ENCODE measurements at regions of chr22 and their contacts with region 1.

Region 1: DNA sequence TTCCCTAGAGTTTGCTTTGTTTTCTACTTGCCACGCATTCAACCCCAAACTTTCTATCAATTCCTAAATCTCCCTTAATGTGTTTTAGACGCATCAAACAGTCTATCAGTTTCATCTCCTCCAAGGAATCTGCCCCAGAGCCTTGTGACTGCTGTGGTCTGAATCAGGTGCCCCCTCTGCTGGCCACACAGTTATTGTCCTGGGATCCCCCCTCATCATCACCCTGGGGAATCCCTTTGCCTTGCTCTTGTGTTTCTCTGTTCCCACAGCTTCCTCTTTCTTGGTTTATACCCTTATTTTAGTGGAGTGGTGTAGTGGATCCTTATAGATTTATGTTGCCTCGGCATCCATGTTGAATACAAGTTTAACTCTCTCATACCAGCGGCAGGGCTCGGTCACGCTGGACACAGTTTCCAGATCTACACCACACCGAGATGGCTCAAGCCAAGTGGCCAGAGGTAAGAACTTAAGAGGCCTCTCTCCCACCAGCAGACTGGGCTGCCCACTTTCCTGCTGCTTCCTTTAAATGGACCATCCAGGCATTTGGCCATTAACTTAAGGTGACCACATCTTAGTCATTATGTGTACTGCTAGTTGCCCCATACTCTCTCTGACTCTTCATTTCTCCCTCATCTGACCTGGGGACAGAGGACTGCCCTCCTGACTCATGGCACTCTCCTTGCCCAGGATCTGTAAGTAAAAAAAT is 8.2 kb downstream of the UPB1 start:
- DNase-seq: peak; percentile 65 to 74
- H3K4me3 ChIP-seq: no peak overlapping the region
- H3K4me3 Mint-ChIP-seq: peak overlapping the region; percentile 29
- H3K27ac Mint-ChIP-seq: peak overlapping the region; percentile 80
- H3K4me1 ChIP-seq: peaks cover 94% of the 10 kb centered on the region
- H3K4me1 Mint-ChIP-seq: peaks cover 65% of the 10 kb centered on the region
- H3K27me3 ChIP-seq: no peaks in the 10 kb centered on the region
- H3K27me3 Mint-ChIP-seq: no peaks in the 10 kb centered on the region
- CTCF ChIP-seq: peak; percentile 70 to 76

Region 2: DNA sequence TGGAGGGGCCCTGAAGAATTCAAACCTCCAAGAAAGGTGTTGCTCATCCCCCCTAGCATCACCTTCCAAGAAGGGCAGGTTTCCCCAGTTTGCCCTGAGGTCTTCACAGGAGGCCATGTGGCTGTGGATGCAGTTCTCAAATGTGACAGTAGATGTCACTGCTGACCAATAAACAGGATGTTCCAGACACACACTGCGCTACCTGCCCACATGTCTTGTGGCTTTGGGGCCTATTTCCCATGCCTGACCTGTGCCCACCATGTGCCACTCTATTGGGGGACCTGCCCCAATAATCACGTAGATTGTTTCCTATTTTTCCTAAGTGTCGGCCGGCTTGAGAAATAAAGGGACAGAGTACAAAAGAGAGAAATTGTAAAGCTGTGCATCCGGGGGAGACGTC is 518.9 kb before region 1 on chr22:
- CTCF ChIA-PET with region 1: no interaction called
- POLR2A ChIA-PET with region 1: no interaction called
- intact Hi-C with region 1: no loop called
- DNase-seq: peak; percentile 53 to 67
- H3K4me3 ChIP-seq: no peak overlapping the region
- H3K4me3 Mint-ChIP-seq: no peak overlapping the region
- H3K27ac Mint-ChIP-seq: no peak overlapping the region
- H3K4me1 ChIP-seq: no peaks in the 10 kb centered on the region
- H3K4me1 Mint-ChIP-seq: no peaks in the 10 kb centered on the region
- H3K27me3 ChIP-seq: no peaks in the 10 kb centered on the region
- H3K27me3 Mint-ChIP-seq: no peaks in the 10 kb centered on the region
- CTCF ChIP-seq: peak; percentile 65 to 80

Region 3: GRCh38 chr22:24379536-24379935 is 123.8 kb before region 1 on chr22:
- CTCF ChIA-PET with region 1: no interaction called
- POLR2A ChIA-PET with region 1: no interaction called
- intact Hi-C with region 1: no loop called
- DNase-seq: no peak
- H3K4me3 ChIP-seq: no peak overlapping the region
- H3K4me3 Mint-ChIP-seq: no peak overlapping the region
- H3K27ac Mint-ChIP-seq: no peak overlapping the region
- H3K4me1 ChIP-seq: no peaks in the 10 kb centered on the region
- H3K4me1 Mint-ChIP-seq: no peaks in the 10 kb centered on the region
- H3K27me3 ChIP-seq: no peaks in the 10 kb centered on the region
- H3K27me3 Mint-ChIP-seq: no peaks in the 10 kb centered on the region
- CTCF ChIP-seq: no peak

Region 4: GRCh38 chr22:24423519-24424000 is 79.7 kb before region 1 on chr22:
- CTCF ChIA-PET with region 1: interaction called, 12 read pairs
- POLR2A ChIA-PET with region 1: no interaction called
- intact Hi-C with region 1: loop called (anchors 2 kb)
- DNase-seq: peak in 1 of 2 experiments; percentile 81
- H3K4me3 ChIP-seq: peak overlapping the region; percentile 68
- H3K4me3 Mint-ChIP-seq: peak overlapping the region; percentile 62
- H3K27ac Mint-ChIP-seq: no peak overlapping the region
- H3K4me1 ChIP-seq: peaks cover 13% of the 10 kb centered on the region
- H3K4me1 Mint-ChIP-seq: peaks cover 18% of the 10 kb centered on the region
- H3K27me3 ChIP-seq: no peaks in the 10 kb centered on the region
- H3K27me3 Mint-ChIP-seq: no peaks in the 10 kb centered on the region
- CTCF ChIP-seq: peak; percentile 51 to 93

Region 5: GRCh38 chr22:24429411-24430365 is 73.6 kb before region 1 on chr22:
- CTCF ChIA-PET with region 1: no interaction called
- POLR2A ChIA-PET with region 1: no interaction called
- intact Hi-C with region 1: loop called (anchors 2 kb)
- DNase-seq: no peak
- H3K4me3 ChIP-seq: no peak overlapping the region
- H3K4me3 Mint-ChIP-seq: no peak overlapping the region
- H3K27ac Mint-ChIP-seq: no peak overlapping the region
- H3K4me1 ChIP-seq: no peaks in the 10 kb centered on the region; the same call in 1 of the 2 replicates
- H3K4me1 Mint-ChIP-seq: peaks cover 6% of the 10 kb centered on the region
- H3K27me3 ChIP-seq: no peaks in the 10 kb centered on the region
- H3K27me3 Mint-ChIP-seq: no peaks in the 10 kb centered on the region
- CTCF ChIP-seq: no peak

Region 6: GRCh38 chr22:24437741-24438328 is 65.5 kb before region 1 on chr22:
- CTCF ChIA-PET with region 1: no interaction called
- POLR2A ChIA-PET with region 1: no interaction called
- intact Hi-C with region 1: loop called (anchors 2 kb)
- DNase-seq: no peak
- H3K4me3 ChIP-seq: no peak overlapping the region
- H3K4me3 Mint-ChIP-seq: no peak overlapping the region
- H3K27ac Mint-ChIP-seq: no peak overlapping the region
- H3K4me1 ChIP-seq: no peaks in the 10 kb centered on the region
- H3K4me1 Mint-ChIP-seq: no peaks in the 10 kb centered on the region
- H3K27me3 ChIP-seq: no peaks in the 10 kb centered on the region
- H3K27me3 Mint-ChIP-seq: no peaks in the 10 kb centered on the region
- CTCF ChIP-seq: no peak

Measured in Caco-2 (cell line).